Dendritic cell treated with granulocyte-macrophage colony-stimulating factor and Interleukin-4, amounts not matched to agents 40 ng/mL and 50 ng/mL, for 4 days (primary cell): ENCODE measurements at regions of chr2 and their contacts with region 1.

Region 1: DNA sequence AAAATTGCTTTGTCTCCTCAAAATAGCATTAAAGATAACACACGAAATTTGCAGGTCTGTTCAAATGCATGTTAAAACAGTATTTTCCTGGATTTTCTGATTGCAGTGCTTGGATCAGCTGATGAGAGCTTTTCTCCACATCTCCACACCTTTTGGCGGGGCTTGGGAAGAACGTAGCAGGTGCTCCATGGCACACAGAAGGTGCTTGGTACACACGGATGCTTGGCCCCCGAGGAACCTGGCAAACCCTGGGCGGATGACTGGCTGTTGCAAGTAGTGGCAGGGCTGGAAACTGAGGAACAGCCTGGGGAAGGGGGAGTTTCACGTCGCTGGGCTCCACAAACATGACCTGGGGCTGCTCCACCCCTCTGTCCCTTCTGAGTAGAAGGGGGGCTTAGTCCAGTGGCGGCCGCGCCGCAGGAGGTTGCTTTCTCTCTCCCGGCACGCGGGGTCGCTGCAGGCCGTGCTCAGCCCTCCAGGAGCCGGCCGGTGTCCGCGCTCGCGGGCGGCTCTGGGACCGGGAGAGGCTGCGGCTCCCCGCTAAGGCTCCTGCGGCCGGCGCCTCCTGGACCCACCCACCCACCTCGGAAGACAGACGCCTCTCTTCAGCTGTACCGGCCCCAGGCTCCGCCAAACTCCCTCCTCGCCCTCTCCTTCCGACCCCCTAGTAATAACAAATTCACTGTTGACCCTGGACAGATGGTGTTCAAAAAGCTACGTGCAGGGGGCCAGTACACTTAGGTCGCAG is 69.3 kb downstream of the MARCO start:
- H3K4me3 Mint-ChIP-seq: no peak overlapping the region
- H3K27ac Mint-ChIP-seq: no peak overlapping the region
- H3K4me1 Mint-ChIP-seq: peaks cover 33% of the 10 kb centered on the region
- H3K27me3 Mint-ChIP-seq: peaks cover 47% of the 10 kb centered on the region

Region 2: GRCh38 chr2:119066272-119066804 is 55.0 kb after region 1 on chr2:
- intact Hi-C with region 1: no loop called
- H3K4me3 Mint-ChIP-seq: no peak overlapping the region
- H3K27ac Mint-ChIP-seq: no peak overlapping the region
- H3K4me1 Mint-ChIP-seq: no peaks in the 10 kb centered on the region
- H3K27me3 Mint-ChIP-seq: peaks cover 2% of the 10 kb centered on the region

Region 3: DNA sequence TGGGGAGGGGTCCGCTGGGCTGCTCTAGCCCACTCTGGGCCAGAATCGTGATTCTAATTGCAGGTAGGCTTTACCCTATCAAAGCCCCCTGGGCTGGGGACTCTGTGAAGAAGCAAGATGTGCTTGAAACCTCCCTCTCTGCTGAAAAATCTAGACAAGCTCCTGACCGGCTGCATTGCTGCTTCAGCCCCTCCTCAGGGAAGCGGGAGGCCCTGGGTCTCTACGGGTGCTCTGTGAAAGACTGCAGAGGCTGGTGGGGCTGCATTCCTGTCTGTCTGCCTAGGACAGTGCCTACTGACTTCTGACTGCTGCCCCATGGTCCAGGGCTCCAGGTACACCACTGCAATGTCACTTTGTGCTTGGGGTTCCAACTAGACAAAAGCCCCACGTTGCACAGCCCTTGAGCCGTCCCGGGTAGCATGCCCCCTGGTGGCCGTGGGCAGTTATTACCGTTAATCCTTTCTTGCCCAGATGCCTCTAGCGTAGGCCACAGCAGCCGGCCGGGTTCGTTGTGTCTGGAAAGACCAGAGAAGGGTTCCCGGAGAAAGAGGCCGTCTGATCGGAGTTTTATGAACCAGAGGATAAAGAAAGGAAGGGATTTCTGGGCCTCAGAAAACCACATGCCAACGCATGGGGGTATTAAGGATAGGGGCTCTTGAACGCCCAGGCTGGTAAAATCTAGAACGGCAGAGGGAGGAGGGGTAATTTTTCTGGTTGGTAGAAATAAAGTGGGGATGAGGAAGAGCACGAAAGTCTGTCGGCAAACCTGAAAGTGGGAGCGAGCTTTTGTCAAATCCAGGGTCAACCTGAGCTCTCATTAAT is 163.1 kb after region 1 on chr2:
- intact Hi-C with region 1: loop called (anchors 1 kb)
- H3K4me3 Mint-ChIP-seq: no peak overlapping the region
- H3K27ac Mint-ChIP-seq: no peak overlapping the region
- H3K4me1 Mint-ChIP-seq: no peaks in the 10 kb centered on the region
- H3K27me3 Mint-ChIP-seq: peaks cover 7% of the 10 kb centered on the region